ENCODE measurements at regions of chr19 and their contacts with region 1.

Region 1: DNA sequence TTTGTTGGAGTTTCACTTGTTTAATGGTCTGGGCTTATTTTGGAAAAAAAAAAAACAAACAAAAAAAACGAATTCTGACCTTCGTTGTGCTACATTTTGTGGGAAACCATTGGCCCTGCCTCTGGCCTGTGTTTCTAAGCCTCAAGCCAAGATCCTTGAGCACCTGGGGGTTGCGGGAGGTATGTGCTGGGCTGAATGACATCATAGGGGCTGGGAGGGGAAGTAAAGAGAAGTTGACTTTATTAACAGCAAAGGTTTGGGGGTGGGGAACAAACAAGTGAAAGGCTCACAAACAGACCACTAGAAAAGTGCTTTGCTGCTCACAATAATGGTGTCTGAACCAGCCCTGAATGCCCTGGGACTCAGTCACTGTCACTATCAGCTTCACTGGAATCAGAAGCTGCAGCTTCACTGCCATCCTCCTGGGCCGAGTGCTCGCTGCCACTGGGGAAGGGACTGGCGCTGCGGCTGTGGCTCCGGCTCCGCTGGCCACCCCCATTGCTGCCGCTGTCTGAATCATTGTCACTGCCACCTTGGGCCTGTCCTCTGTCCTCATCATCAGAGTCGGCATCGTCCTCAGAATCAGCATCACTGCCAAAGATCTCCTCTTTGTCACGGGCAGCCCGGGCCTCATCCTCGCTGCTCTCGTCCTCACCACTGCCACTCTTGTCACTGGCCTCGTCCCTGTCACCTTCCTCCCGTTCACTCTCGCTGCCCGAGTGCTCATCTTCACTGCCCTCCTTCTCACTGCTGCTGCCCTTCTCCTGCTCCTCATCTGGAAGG is 5.1 kb downstream of the PAF1 start:
- DNase-seq: no peak

Region 2: DNA sequence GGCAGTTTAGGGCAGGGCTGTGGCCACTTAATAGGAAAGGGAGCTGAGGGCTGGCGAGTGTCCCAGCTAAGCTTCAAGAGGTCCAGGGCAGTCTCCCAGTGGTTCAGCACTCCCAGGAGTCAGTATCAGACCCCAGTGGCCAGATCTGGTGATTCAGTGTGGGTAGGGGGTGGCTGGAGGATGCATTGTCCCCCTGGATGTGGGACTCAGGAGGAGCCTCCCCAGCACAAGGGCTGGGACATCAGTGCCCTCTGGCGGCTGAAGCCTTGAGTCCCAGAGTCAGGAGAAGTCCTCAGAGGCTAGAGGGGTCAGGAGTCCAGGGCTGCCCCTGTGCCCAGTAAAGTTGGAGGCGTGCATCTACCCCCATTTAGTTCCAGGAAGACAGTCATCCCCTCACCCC is 1001.2 kb before region 1 on chr19:
- intact Hi-C with region 1: loop called in 1 of 2 experiments (anchors 2 kb)
- DNase-seq: no peak

Region 3: DNA sequence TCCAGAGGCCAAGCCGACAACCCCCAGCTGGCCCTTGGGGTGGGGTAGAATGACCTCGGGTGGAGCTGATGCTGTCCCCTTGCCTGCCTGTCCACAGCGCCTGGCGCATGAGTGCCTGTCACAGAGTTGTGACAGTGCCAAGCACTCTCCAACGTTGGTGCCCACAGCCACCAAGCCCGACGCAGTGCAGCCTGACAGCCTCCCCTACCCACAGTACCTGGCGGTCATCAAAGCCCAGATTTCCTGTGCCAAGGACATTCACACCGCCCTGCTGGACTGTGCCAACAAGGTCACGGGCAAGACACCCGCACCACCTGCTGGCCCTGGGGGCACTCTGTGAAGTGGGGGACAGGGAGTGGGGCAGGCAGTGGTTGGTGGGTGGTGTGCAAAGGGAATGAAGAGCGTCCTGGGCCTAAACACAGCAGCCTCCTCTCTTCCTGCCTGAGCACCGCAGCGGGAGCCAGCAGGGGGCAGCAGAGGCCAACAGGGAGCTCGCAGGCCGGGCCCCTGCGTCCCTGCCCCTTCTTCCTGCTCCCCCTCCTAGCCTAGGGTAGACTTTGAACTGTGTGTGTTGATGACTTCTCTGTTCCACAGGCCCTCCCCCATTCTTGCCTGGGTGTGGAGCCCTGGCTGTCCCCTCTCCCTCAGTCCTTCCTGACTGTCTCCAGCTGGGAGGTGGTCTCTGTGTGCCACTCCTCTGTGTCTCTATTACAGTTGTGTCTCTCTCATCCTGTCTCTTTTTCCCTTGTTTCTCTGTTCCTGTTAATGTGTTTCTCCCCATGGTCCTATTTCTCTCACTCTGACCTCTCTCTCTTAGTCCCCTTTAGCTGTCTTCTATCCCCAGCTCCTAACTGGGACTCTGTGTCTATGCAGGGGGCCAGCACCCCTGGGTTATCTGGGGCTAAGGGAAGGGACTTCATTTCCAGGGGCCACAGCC is 11.8 kb after region 1 on chr19:
- intact Hi-C with region 1: no loop called
- DNase-seq: peak; percentile 98

Region 4: DNA sequence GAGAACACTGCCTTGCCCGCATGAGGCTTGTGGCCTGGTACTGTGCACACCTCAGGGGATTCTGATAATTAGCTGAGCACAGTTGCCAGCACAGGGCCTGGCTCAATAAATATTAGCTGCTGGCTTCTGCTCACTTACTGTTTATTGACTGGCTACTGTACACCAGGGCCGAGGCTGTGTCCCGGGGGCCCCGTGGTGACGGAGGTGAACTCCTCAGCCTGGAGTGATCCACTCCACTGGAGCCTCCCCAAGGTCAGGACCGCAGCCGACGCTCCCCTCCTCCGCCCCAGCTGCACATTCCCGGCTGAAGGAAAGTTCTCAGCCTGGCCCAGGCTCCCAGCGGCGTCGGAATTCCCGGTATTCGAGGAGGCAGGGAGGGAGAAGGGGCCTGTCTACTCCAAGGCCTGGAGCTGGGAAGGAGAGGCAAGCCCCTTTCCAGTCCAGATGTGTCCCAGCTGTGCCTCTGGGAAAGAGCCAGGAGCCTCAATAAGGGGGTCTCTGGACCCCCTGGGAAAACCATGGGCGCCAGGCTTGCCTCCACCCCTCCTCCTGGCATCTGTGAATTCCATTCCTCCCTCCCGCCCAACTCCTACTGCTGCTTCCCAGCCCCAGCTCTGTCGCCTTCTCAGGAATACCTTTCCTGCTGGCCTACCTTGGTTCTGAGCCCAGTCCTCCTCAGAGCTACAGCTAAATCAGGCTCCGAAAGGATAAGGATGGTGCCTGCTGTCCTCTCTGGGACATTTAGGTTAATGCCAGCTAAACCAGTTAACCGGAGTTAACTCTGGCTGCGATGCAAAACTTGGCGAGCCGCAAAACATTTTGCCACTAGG is 42.7 kb after region 1 on chr19:
- intact Hi-C with region 1: no loop called
- DNase-seq: peak; percentile 93

Measured in posterior vena cava (tissue), 2 donors.